GM10248 (cell line): ENCODE measurements at regions of chr16 and their contacts with region 1.

Region 1: DNA sequence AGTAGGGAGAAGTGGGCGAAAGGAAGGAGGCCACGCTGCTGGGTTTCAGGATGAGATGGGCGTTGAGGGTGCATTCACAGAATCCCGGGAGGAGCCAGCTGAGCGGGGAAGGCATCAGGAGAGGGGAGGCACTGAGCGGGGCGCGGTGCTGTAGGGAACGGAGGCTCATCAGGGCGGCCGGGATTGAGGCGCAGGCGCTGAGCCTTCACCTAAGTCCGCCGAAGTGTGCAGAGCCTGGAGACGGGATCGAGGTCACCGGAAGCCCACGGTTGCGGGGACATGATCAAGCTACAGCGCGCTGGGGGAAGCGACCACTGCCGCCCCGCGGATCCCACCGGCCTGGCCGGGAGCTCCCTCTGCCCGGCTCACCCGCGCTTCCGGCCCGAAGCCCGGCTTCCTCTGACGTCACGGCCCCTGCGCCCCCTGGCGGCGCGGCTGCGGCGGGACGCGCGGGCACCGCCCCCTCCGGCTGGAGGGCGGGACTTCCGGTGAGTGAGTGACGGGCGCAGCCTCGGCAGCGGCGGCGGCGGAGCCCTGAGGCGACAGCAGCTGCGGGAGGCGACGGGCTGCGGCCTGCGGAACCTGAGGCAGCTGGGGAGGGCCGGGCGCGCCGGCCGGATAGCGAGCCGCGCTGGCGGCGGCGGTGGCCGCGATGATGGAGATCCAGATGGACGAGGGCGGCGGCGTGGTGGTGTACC is at the start of gene MAPK8IP3:
- DNase-seq: peak; percentile 99
- CTCF ChIP-seq: peak; percentile 99

Region 2: DNA sequence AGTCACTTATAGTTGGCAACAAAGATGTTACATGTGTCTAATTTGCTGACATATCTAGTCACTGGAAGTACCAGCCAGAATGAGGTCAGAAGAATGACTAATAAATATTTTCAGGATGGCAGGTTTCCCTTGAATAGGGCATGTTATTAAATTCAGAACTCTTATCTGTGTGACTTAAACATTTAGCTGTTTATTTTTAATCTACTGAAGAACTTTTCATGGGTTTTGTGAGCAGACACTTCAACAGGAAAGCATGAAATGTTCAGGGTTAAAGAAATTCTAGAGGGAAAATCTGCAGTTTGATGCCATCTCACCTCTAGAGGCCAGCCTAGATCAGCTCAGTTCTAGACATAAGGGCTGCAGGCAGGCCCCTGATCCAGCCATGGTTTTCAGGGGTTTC is 14.6 kb before region 1 on chr16:
- CTCF ChIA-PET with region 1: interaction called, 15 read pairs
- POLR2A ChIA-PET with region 1: no interaction called
- DNase-seq: no peak
- CTCF ChIP-seq: no peak